AG04449 (cell line): ENCODE measurements at regions of chr1 and their contacts with region 1.

Region 1: DNA sequence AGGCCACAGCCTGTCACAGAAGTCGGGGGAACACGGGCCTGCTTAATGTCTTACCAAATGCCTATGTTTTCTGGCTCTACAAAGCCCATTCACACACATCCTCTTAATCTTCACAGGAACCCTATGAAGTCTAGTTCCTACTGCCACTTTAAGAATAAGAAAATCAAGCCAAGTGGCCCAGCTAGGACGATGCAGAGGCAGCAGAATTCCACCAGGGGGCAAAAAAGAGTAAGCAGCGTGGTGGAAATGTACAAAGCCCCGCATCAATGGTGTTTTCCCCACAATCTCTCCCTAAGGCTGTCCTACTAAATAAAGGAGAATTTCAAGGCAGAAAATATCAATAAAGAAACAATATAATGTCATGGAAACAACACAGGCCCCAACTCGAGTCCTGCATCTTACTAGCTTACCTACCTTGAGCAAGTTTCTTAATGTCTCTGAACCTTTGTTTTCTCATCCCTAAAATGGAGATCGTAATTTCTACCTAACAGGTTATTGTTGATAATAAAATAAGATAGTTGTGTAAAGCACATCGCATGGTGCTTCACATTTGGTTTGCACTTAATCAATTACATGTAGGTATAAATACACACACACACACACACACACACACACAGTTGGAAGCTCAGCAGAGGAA is 21.4 kb downstream of the SEC16B start:
- DNase-seq: no peak
- H3K4me3 ChIP-seq: no peak overlapping the region
- CTCF ChIP-seq: peak; percentile 80

Region 2: DNA sequence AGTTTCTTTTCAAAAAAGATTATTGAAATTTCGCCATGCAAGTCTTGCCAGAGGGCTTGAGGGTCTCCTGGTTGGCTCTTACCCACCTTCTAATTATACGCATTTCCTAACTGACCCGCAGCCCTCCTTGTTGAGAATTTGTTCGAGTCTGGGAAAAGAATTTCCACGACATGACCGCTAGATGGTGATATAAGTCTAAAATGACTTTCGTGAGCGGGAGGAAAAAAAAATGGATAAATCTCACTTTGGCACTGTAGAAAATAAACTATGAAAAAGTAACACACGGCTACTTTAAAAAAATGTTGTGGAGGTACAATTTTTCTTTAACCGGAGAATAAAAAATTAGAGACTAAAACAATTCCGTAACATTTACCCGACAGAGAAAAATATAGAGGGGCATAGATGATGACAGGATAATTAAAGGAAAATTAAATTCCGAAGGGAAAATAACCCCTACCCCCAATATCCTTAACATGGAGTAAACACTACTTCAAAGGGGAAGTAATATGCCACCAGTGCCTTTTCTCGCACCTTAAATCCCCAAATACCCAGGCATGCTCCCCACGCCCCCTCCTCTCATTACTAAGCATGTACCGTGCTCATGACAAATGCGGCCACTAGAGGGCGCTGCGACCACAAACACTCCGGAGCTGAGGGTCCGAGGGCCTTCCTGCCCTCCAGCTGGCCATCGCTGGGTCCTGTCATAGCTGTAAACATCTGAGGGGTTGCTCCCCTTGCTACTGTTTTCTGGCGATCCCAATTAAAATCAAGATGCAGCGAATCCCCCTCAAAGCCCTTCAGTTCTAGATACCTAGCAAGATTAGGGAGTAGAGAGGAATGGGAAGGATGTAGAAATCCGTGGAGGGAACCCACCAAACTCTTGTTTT is 1050.9 kb before region 1 on chr1:
- CTCF ChIA-PET with region 1: interaction called, 183 read pairs
- POLR2A ChIA-PET with region 1: no interaction called
- DNase-seq: peak; percentile 7
- H3K4me3 ChIP-seq: no peak overlapping the region
- CTCF ChIP-seq: peak; percentile 89

Region 3: DNA sequence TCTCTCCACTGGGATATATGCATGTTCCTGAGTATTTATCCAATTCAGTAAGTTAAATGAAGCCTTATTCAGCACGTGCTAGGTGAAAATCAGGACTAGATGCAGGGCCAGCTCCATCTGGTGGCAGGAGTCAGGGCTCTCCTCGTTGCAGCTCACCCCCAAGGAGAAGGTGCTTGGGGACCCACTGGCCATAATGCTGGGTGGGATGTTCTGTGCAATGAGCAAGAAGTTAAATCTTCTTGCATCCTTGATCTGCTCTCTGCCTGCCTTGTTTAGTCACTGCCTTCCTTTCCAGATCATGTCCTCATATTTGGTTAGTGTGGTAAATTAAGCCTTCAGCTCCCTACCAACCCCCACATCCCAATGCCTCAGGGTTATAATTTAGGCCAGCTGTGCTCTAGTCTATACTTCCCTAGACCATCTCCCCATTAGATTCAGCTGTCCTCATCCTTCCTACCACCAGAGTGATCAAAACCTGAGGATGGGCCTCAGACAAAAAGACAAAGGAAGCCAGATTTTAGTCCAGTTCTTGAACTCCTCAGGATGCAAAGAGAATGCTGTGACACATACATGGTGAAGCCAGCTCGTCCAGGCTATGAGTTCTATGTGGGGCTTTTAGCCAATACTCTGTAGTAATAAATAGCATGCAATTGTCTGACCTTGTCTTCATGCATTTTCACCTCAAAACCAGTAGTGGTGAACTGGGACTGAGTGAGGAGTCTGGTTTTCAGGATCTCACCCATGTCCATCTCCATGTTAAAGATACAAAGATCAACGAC is 34.5 kb before region 1 on chr1:
- CTCF ChIA-PET with region 1: interaction called, 15 read pairs
- POLR2A ChIA-PET with region 1: no interaction called
- DNase-seq: no peak
- H3K4me3 ChIP-seq: no peak overlapping the region
- CTCF ChIP-seq: peak; percentile 73

Region 4: GRCh38 chr1:177937931-177938330 is 10.5 kb before region 1 on chr1:
- CTCF ChIA-PET with region 1: interaction called, 95 read pairs
- POLR2A ChIA-PET with region 1: no interaction called
- DNase-seq: no peak
- H3K4me3 ChIP-seq: no peak overlapping the region
- CTCF ChIP-seq: no peak

Region 5: DNA sequence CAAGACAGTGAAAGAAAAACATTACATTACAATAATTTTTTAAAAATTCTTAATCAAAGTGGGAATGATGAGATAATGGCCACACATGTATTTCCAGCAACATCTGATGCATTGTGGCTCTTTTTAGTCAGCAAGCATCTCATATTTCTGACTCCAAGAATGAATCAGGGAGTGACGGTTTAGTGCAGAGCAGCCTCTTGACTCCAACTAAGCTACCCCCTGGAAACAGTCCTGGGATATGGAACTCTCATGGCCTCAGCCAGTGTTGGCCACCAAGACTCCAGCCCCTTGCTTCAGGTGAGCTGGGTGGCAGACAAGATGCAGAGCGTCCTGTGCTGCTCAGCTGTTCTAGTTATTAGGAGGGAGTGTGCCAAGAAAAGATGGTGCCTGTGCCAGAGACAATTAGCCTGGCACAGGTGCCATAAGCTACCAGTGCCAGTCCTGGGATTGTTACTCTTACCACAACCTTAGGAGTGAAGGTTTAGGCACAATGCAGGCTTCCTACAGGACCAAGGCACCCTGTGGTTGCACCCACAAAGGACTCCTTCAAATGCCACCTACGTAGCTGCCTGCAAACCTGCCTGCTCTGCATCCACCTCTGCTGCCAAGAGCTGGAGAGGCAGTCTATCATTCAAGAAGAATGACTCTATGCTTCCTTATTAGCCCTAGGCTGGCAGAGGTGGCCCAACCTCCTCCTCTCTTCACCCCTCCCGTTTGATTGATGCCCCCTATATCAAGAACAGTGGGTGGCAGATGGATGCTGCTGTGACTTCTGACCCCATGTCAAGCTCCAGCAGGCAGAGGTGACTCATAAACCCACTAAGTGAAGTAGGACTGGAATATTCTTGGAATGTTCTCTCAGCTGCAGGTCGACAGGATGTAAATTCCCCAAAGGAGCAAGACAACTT is 27.4 kb after region 1 on chr1:
- CTCF ChIA-PET with region 1: interaction called, 10 read pairs
- POLR2A ChIA-PET with region 1: interaction called, 3 read pairs
- DNase-seq: no peak
- H3K4me3 ChIP-seq: no peak overlapping the region
- CTCF ChIP-seq: no peak